HEK293 (cell line): ENCODE measurements at regions of chr9 and their contacts with region 1.

Region 1: GRCh38 chr9:109182940-109183798 is 16.1 kb upstream of the FRRS1L start:
- H3K4me3 ChIP-seq: no peak overlapping the region
- H3K27ac ChIP-seq: no peak overlapping the region
- H3K4me1 ChIP-seq: no peaks in the 10 kb centered on the region
- CTCF ChIP-seq: 0 out of 2 replicates have a peak, but pooled peaks have one; percentile 9

Region 2: DNA sequence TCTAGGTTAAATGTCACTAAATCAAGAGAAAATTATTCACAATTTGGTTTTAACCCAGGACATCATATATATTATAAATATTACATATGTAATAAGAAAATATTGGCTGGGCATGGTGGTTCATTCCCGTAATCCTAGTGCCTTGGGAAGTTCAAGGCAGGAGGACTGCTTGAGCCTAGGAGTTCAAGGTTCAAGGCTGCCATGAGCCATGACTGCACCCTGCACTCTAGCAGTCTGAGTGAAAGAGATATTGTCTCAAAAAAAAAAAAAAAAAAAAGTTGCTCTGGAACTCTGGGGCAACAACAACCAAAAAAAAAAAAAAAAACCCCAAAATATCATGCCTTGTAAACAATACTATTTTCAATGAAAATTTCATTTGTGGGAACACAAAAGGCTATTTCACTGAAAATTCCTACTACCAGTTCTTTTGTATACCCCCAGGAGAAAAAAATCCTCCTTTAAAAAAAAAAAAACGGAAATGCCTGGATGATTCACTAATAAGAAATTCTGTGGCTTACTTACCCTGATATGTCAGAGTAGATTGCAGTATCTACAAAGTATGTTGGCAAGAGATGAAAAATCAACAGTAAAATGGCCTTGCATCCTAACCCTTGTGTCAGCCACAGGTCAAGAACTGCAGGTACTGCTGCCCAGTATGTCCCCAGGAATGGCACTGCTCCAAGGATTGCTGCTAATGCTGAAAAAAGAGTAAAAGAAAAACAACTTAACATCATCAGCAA is 147.3 kb before region 1 on chr9:
- CTCF ChIA-PET with region 1: no interaction called
- POLR2A ChIA-PET with region 1: no interaction called
- H3K4me3 ChIP-seq: no peak overlapping the region
- H3K27ac ChIP-seq: no peak overlapping the region
- H3K4me1 ChIP-seq: no peaks in the 10 kb centered on the region
- CTCF ChIP-seq: no peak

Region 3: GRCh38 chr9:109171926-109172325 is 11.2 kb before region 1 on chr9:
- CTCF ChIA-PET with region 1: interaction called, 21 read pairs
- POLR2A ChIA-PET with region 1: no interaction called
- H3K4me3 ChIP-seq: no peak overlapping the region
- H3K27ac ChIP-seq: no peak overlapping the region
- H3K4me1 ChIP-seq: no peaks in the 10 kb centered on the region; the same call in 1 of the 2 replicates
- CTCF ChIP-seq: no peak

Region 4: GRCh38 chr9:109232449-109233237 is 49.5 kb after region 1 on chr9:
- CTCF ChIA-PET with region 1: no interaction called
- POLR2A ChIA-PET with region 1: no interaction called
- H3K4me3 ChIP-seq: no peak overlapping the region
- H3K27ac ChIP-seq: no peak overlapping the region
- H3K4me1 ChIP-seq: no peaks in the 10 kb centered on the region
- CTCF ChIP-seq: no peak